Activated naive CD4-positive, alpha-beta T cell treated with anti-CD3 and anti-CD28 coated beads for 36 hours (primary cell): ENCODE measurements at regions of chr3 and their contacts with region 1.

Region 1: GRCh38 chr3:158109804-158110657 is at the start of gene RSRC1:
- DNase-seq: peak; percentile 86
- H3K4me3 Mint-ChIP-seq: peak within 1 kb of the TSS; percentile 97
- H3K27ac Mint-ChIP-seq: peak within 1 kb of the TSS; percentile 77
- H3K4me1 Mint-ChIP-seq: peaks cover 58% of the 10 kb centered on the region
- H3K27me3 Mint-ChIP-seq: peaks cover 34% of the 10 kb centered on the region
- total RNA-seq, gene RSRC1: 48.4 to 50.1 TPM

Region 2: DNA sequence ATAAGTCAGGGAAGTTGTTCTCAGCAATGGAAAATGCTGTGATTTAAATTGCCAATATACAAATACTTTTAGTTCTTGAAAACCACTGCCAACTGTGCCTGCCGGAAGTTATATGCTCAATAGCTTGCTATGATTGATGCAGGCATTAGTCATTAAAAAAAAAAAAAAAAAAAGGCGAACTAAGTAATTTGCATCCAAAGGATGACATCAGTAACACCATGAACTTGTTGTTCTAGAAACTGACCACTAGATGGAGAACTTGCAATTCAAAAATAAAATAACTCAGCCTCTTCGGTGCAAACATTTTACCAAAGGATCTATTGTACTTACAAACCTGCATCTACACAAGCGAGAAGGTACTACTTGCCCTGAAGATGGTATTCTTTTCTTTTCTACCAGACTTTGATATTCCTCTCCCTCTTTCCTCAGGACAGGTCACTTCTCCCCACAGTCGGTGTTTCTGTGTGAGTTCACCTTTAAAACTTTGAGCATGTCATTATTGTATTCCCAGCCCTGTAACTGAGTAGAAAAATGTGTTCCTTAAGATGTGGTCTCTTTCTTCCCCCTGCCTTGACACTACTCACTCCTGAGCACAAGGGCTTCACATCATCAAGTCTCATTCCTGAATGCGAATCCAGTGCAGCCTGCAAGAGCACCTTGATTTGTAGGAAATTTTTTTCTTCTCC is 491.8 kb before region 1 on chr3:
- CTCF ChIA-PET with region 1: no interaction called
- intact Hi-C with region 1: loop called (anchors 5 kb)
- DNase-seq: peak; percentile 26
- H3K4me3 Mint-ChIP-seq: no peak overlapping the region
- H3K27ac Mint-ChIP-seq: no peak overlapping the region
- H3K4me1 Mint-ChIP-seq: peaks cover 5% of the 10 kb centered on the region
- H3K27me3 Mint-ChIP-seq: peaks cover 13% of the 10 kb centered on the region

Region 3: DNA sequence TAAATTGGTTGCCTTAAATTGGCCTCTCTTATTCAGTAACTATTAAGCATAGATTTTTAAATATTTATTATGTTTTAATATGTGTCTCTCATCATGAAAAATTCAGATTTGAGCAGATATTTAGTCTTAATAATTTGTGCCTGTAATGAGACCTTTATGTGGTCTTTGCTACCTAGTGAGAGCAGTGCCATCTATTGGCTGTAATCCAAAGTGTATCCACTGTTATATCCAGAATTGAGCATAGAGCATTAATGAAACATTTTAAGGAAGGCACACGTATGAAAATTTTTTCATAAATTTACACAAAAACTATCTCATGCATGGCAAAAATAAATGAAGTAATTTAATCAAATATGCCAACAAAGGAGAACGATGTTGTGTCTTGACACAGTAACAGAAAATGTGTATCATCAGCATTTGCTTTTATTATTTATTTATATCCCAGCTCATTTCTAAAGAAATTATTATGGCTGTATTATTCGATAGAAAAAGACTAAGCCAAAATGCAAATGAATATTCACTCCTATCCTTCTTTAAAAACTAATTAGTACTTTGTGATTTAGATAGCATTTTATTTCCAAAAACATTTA is 203.4 kb after region 1 on chr3:
- CTCF ChIA-PET with region 1: interaction called, 3 read pairs
- intact Hi-C with region 1: loop called (anchors 1 kb)
- DNase-seq: no peak
- H3K4me3 Mint-ChIP-seq: no peak overlapping the region
- H3K27ac Mint-ChIP-seq: no peak overlapping the region
- H3K4me1 Mint-ChIP-seq: peaks cover 1% of the 10 kb centered on the region
- H3K27me3 Mint-ChIP-seq: no peaks in the 10 kb centered on the region

Region 4: GRCh38 chr3:158532099-158532734 is 422.2 kb after region 1 on chr3:
- CTCF ChIA-PET with region 1: no interaction called
- intact Hi-C with region 1: loop called (anchors 5 kb)
- DNase-seq: peak; percentile 18
- H3K4me3 Mint-ChIP-seq: no peak overlapping the region
- H3K27ac Mint-ChIP-seq: no peak overlapping the region
- H3K4me1 Mint-ChIP-seq: no peaks in the 10 kb centered on the region
- H3K27me3 Mint-ChIP-seq: no peaks in the 10 kb centered on the region